ENCODE measurements at regions of chr1 and their contacts with region 1.

Region 1: GRCh38 chr1:151254217-151255213 is at the start of gene PSMD4:
- DNase-seq: peak; percentile 93 to 95
- H3K4me3 ChIP-seq: peak within 1 kb of the TSS; percentile 76
- H3K27ac ChIP-seq: peak within 1 kb of the TSS; percentile 57
- H3K4me1 ChIP-seq: peaks cover 7% of the 10 kb centered on the region
- H3K27me3 ChIP-seq: no peaks in the 10 kb centered on the region
- CTCF ChIP-seq: no peak
- total RNA-seq, gene PSMD4: 230 and 255 TPM in 2 replicates

Region 2: DNA sequence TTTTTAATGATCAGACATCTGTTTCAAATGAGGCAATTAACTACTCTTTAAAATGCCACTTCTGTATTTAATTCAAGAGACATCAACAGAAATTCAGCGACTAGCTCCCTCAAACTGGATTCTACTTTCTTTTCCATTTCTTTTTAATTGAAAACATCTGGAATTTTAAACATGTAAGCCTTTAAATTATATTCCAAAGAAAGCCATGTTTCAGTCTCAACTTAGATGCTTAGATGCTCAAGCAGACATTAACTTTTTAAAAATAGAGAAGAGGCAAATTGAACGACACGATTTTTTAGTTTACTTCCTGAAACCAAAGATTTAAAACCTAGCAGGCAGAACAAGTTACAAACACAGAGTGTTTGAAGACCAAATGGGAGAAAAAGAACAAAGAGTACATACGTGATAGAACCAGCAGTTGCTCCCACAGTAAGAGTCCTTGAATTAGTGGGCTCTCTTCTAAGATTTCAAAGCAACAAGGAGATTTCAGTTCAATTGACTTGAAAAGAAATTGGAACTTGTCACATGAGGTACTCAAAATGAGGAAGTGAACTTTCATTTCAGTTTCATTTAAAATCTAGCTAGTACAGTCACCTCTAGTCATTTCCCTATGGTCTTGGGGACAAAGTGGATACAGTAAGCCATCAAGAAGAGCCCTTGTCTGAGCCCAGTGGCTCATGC is 489.1 kb before region 1 on chr1 and contains the start of gene CTSS:
- CTCF ChIA-PET with region 1: no interaction called
- POLR2A ChIA-PET with region 1: no interaction called
- intact Hi-C with region 1: no loop called
- DNase-seq: no peak
- H3K4me3 ChIP-seq: no peak within 1 kb of the TSS; the same call in 1 of the 2 replicates
- H3K27ac ChIP-seq: peak within 1 kb of the TSS; percentile 17; the same call in 1 of the 2 replicates
- H3K4me1 ChIP-seq: 0 out of 2 replicates have a peak, but pooled peaks cover 18% of the 10 kb centered on the region
- H3K27me3 ChIP-seq: no peaks in the 10 kb centered on the region
- CTCF ChIP-seq: no peak
- total RNA-seq, gene CTSS: 6.3 and 7.2 TPM in 2 replicates

Region 3: DNA sequence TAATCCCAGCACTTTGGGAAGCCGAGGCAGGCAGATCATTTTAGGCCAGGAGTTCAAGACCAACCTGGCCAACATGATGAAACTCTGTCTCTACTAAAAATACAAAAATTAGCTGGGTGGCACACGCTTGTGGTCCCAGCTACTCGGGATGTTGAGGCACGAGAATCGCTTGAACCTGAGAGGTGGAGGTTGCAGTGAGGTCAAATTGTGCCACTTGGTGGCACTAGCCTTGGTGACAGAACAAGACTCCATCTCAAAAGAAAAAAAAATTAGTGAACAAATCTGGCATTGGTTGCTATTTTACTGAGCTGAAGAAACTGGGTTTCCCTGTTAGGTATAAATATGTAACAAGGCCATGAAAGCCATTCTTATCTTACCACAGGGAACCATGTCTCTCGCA is 26.9 kb before region 1 on chr1:
- CTCF ChIA-PET with region 1: interaction called, 9 read pairs
- POLR2A ChIA-PET with region 1: interaction called, 21 read pairs
- intact Hi-C with region 1: no loop called
- DNase-seq: no peak
- H3K4me3 ChIP-seq: no peak overlapping the region
- H3K27ac ChIP-seq: no peak overlapping the region
- H3K4me1 ChIP-seq: no peaks in the 10 kb centered on the region
- H3K27me3 ChIP-seq: no peaks in the 10 kb centered on the region
- CTCF ChIP-seq: no peak; the same call in 1 of the 2 replicates

Region 4: DNA sequence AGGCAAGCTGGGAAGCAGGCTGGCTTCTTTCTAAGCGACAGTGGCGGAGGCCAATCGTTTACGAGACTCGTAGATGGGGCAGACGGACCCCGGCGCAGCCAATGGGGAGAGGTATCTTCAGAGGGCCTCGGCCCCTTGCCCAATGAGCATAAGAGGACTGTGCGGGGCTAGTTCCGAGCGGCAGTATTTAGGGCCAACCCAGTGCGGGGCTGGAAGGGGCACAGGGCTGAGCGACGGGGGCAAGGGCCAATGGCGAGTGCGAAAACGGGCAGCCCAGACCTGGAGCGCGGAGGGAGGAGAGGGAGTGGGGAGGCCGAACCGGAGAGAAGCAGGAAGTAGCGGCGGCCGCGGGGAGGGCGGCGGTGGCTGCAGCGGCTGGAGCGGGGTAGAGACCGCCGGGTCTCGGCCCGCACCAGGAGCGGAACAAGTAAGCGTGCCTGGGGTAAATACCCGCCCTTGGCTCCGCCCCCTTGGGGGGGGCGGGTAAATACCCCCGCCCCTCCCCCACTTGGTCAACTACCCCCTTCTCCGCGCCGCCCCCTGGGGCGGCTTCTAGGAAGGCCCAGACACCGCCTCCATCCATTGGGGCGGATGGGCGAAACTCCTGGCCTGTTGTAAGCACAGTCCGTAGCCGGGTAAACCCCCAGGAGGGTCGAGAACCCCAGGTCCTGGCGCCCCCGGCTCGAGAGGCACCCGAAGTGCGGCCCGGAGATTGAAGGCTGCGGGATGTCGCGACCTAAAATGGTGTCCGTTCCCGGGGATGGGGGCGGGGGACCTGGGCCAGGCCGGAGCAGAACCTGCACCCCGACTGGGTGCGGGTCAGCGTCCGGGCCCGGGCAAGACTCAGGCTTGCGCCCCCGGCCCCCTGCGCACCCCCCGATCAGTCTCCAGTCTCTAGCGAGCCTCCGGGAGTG is 27.7 kb after region 1 on chr1 and contains the start of gene ZNF687:
- CTCF ChIA-PET with region 1: interaction called, 3 read pairs
- POLR2A ChIA-PET with region 1: interaction called, 5 read pairs
- intact Hi-C with region 1: loop called (anchors 1 kb)
- DNase-seq: peak; percentile 99 to 100
- H3K4me3 ChIP-seq: peak within 1 kb of the TSS; percentile 62
- H3K27ac ChIP-seq: peak within 1 kb of the TSS; percentile 90
- H3K4me1 ChIP-seq: peaks cover 13% of the 10 kb centered on the region; the same call in 1 of the 2 replicates
- H3K27me3 ChIP-seq: no peaks in the 10 kb centered on the region
- CTCF ChIP-seq: no peak
- total RNA-seq, gene ZNF687: 26.6 and 28.7 TPM in 2 replicates

Region 5: GRCh38 chr1:151292207-151293030 is 37.9 kb after region 1 on chr1:
- CTCF ChIA-PET with region 1: no interaction called
- POLR2A ChIA-PET with region 1: interaction called, 29 read pairs
- intact Hi-C with region 1: no loop called
- DNase-seq: peak in 1 of 2 experiments; percentile 24
- H3K4me3 ChIP-seq: no peak overlapping the region
- H3K27ac ChIP-seq: no peak overlapping the region
- H3K4me1 ChIP-seq: no peaks in the 10 kb centered on the region
- H3K27me3 ChIP-seq: no peaks in the 10 kb centered on the region
- CTCF ChIP-seq: no peak

Region 6: DNA sequence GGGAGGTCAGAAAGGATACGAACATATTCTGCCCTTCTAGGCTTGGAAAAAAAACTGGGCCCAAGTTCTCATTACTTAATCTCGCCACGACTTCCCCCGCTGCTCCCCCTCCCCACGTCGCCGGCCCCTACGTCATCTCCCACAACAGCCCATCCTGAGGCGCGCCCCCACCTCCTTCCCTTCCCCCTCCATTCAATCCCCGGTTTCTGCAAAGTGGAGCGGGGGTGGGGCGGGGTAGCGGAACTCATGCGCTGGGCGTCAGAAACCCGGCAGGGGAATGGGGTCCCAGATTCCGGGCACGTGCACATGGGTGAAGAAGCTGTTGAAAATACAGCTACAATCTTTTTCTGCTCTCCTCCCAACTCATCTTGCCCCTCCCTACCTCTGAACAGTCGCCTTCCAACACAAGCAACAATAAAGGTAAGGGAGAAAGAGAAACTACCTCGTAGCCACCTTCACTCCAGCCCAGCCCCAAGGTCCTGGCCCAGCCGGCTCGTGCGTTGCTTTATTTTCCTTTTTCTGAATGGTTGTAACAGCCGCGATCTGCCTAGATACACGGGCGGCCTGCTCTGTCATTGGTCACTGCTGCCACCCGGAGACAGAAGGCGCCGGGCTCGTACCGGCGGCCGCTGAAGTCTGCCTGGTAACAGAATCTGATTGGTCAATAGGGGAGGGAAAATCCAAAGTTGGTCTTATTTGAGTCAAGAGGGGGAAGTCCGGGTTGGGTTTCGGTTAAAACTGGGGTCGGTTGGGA is 92.4 kb after region 1 on chr1 and contains the start of gene RFX5:
- CTCF ChIA-PET with region 1: interaction called, 16 read pairs
- POLR2A ChIA-PET with region 1: no interaction called
- intact Hi-C with region 1: no loop called
- DNase-seq: peak; percentile 93 to 94
- H3K4me3 ChIP-seq: peak within 1 kb of the TSS; percentile 82
- H3K27ac ChIP-seq: peak within 1 kb of the TSS; percentile 83
- H3K4me1 ChIP-seq: peaks cover 11% of the 10 kb centered on the region
- H3K27me3 ChIP-seq: no peaks in the 10 kb centered on the region
- CTCF ChIP-seq: no peak
- total RNA-seq, gene RFX5: 73.6 and 75.7 TPM in 2 replicates

Region 7: GRCh38 chr1:151653397-151653796 is 398.9 kb after region 1 on chr1:
- CTCF ChIA-PET with region 1: interaction called, 18 read pairs
- POLR2A ChIA-PET with region 1: no interaction called
- intact Hi-C with region 1: no loop called
- DNase-seq: no peak
- H3K4me3 ChIP-seq: no peak overlapping the region
- H3K27ac ChIP-seq: no peak overlapping the region
- H3K4me1 ChIP-seq: no peaks in the 10 kb centered on the region
- H3K27me3 ChIP-seq: no peaks in the 10 kb centered on the region
- CTCF ChIP-seq: no peak

Region 8: GRCh38 chr1:151828965-151829698 is 574.6 kb after region 1 on chr1:
- CTCF ChIA-PET with region 1: interaction called, 20 read pairs
- POLR2A ChIA-PET with region 1: no interaction called
- intact Hi-C with region 1: no loop called
- DNase-seq: peak in 1 of 2 experiments; percentile 53
- H3K4me3 ChIP-seq: no peak overlapping the region
- H3K27ac ChIP-seq: no peak overlapping the region
- H3K4me1 ChIP-seq: peaks cover 38% of the 10 kb centered on the region
- H3K27me3 ChIP-seq: no peaks in the 10 kb centered on the region
- CTCF ChIP-seq: no peak